Thyroid gland (tissue), 4 donors: ENCODE measurements at regions of chr13 and their contacts with region 1.

Region 1: GRCh38 chr13:73058736-73059459 is at the start of gene KLF5:
- DNase-seq: peak; percentile 99
- H3K4me3 ChIP-seq: peak within 1 kb of the TSS; percentile 53 to 67 (median 56)
- H3K27ac ChIP-seq: peak within 1 kb of the TSS; percentile 76 to 93 (median 87)
- H3K4me1 ChIP-seq: peaks cover 11 to 14% of the 10 kb centered on the region in 2 donors
- H3K27me3 ChIP-seq: no peaks in the 10 kb centered on the region
- CTCF ChIP-seq: no peak
- POLR2A ChIP-seq: peak; percentile 96 to 100
- total RNA-seq, gene KLF5: 15.6 to 37.2 (median 23.6) TPM

Region 2: DNA sequence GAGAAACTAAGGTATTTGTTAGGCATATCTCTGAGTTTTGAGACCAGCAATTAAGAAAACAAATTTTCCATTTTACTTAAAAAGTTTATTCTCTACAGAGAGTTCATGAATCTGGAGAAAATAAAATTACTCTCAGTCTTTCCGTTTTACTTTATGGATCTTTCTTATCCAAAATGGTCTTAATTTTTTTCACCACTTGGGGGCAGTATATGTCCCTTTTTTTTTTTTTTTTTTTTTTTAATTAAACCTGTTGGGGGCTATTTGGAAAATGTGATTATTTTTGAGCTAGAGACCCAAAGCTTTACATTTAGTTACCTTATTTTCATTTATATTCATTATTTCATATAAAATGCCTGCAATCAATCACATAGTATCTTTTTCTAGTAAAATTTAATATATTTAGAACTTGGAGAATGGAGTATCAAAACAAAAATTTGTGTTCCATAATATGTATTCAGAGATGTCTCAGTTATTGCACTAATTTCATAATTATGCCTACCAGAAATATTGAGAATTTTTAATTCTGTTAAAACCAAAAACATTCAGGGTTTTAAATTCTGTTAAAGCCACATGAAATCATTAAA is 249.9 kb before region 1 on chr13:
- intact Hi-C with region 1: loop called (anchors 10 kb)
- DNase-seq: no peak
- H3K4me3 ChIP-seq: no peak overlapping the region
- H3K27ac ChIP-seq: peak overlapping the region; percentile 39 to 46 (median 44)
- H3K4me1 ChIP-seq: peaks cover 4 to 11% of the 10 kb centered on the region in 2 donors
- H3K27me3 ChIP-seq: no peaks in the 10 kb centered on the region
- CTCF ChIP-seq: peak in 4 of 6 experiments; percentile 36 to 75 (median 68)
- POLR2A ChIP-seq: no peak

Region 3: DNA sequence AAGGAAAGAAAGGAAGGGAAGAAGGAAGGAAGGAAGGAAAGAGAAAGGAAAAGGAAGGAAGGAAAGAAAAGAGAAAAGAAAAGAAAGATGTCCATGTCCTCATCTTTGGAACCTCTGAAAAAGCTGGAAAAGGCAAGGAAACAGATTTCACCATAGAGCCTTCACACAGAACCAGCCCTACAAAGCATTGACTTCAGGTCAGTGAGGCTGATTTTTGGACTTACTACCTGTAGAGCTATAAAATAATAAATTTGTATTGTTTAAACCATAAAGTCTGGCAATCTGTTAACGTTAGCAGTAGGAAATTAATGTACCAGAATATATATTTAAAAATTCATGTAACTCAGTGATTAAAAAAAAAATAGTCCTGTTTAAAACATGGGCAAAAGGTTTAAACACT is 146.9 kb before region 1 on chr13:
- intact Hi-C with region 1: no loop called
- DNase-seq: no peak
- H3K4me3 ChIP-seq: no peak overlapping the region
- H3K27ac ChIP-seq: no peak overlapping the region
- H3K4me1 ChIP-seq: no peaks in the 10 kb centered on the region
- H3K27me3 ChIP-seq: no peaks in the 10 kb centered on the region
- CTCF ChIP-seq: no peak
- POLR2A ChIP-seq: no peak

Region 4: GRCh38 chr13:72931311-72931710 is 127.6 kb before region 1 on chr13:
- intact Hi-C with region 1: no loop called
- DNase-seq: no peak
- H3K4me3 ChIP-seq: no peak overlapping the region
- H3K27ac ChIP-seq: peak overlapping the region; percentile 18 to 61 (median 37)
- H3K4me1 ChIP-seq: peaks cover 0 to 6% of the 10 kb centered on the region in 2 donors
- H3K27me3 ChIP-seq: no peaks in the 10 kb centered on the region
- CTCF ChIP-seq: no peak
- POLR2A ChIP-seq: no peak

Region 5: DNA sequence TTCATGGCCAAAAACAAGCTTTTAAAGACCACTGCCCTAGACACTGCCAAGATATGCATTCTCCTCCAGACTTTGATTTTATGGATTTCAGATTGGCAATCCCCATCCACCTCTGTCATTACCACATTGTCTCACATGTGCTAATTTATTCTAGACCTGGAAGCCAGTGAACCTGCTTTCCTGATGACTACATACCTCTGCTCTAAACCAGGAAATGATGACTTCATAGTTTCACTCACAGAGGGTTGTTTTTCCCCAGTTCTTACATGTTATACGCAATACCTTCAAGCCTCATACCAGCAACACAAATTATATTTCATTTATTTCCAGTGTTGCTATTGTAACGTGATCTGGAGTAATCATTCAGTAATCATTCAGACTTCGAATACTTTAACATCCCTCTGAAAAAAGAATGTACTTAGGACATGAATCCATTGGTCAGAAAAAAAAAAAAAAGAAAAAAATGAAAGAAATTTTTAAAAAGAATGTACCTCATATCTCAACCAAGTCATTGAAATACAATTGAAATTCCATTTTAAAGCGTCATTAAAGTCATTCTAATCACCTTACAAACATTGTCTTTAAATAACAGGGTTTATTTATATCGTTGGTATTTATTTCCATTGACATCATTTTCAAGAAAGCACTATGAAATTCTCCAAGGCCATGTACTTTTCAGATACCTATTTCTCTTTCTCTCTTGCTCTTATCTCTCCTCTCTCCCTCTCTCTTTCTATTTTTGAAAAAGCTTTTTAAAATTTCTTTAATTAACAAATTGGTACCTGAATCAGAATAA is 33.5 kb before region 1 on chr13:
- intact Hi-C with region 1: no loop called
- DNase-seq: no peak
- H3K4me3 ChIP-seq: no peak overlapping the region
- H3K27ac ChIP-seq: no peak overlapping the region
- H3K4me1 ChIP-seq: no peaks in the 10 kb centered on the region
- H3K27me3 ChIP-seq: no peaks in the 10 kb centered on the region
- CTCF ChIP-seq: no peak
- POLR2A ChIP-seq: no peak

Region 6: GRCh38 chr13:73355134-73355533 is 296.2 kb after region 1 on chr13:
- intact Hi-C with region 1: no loop called
- DNase-seq: no peak
- H3K4me3 ChIP-seq: no peak overlapping the region
- H3K27ac ChIP-seq: no peak overlapping the region
- H3K4me1 ChIP-seq: no peaks in the 10 kb centered on the region
- H3K27me3 ChIP-seq: no peaks in the 10 kb centered on the region
- CTCF ChIP-seq: no peak
- POLR2A ChIP-seq: no peak

Region 7: GRCh38 chr13:73708393-73708985 is 649.6 kb after region 1 on chr13:
- intact Hi-C with region 1: loop called (anchors 10 kb)
- DNase-seq: peak; percentile 60 to 68
- H3K4me3 ChIP-seq: no peak overlapping the region
- H3K27ac ChIP-seq: no peak overlapping the region
- H3K4me1 ChIP-seq: peaks cover 0 to 4% of the 10 kb centered on the region in 2 donors
- H3K27me3 ChIP-seq: no peaks in the 10 kb centered on the region
- CTCF ChIP-seq: peak; percentile 52 to 94 (median 84)
- POLR2A ChIP-seq: no peak